K562 (cell line): ENCODE measurements at regions of chr14 and their contacts with region 1.

Region 1: DNA sequence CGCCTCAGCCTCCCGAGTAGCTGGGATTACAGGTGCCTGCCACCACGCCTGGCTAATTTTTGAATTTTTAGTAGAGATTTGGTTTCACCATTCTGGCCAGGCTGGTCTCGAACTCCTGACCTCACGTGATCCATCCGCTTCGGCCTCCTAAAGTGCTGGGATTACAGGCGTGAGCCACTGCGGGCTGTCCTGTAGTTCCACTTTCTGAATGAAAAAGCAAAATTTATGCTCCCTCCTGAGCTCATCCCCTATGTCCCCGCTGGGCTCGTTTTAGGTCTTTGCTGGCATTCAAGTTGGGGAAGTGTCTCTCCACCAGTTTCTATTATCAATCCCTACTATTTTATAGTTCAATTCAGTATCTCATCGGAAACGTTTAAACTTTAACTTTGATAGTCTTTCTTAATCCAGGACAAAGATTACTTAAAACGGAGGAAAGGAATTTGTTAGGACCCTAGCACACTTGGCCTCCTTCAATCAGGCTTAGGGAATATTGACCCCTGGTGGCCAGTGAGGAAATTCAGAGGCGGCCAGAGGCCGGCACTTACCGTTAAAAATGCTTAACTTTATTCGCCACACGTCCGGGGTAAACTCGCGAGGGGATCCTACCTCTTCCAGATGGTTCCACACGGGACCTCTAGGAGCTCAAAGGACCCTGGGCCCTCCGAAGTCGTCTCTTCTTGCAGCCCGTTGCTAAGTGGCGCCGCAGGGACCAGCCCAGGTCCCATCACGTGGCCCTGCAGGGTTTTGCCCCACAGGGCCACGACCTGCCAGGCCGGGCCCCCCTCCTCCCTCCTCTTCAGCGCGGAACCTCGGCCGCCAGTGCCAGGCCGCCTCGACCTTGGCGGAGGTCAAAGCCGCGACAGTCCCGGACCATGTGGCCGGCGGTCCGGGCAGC is 11.4 kb upstream of the DNAL1 start:
- DNase-seq: peak; percentile 33 to 64 (median 40)
- ATAC-seq: peak; percentile 85
- H3K4me3 ChIP-seq: no peak overlapping the region
- H3K27ac ChIP-seq: no peak overlapping the region
- H3K4me1 ChIP-seq: peaks cover 8 to 9% of the 10 kb centered on the region in 2 experiments; a peak in 4 of 5 replicates
- H3K27me3 ChIP-seq: no peaks in the 10 kb centered on the region
- CTCF ChIP-seq: peak; percentile 67 to 78 (median 73)
- EP300 ChIP-seq: no peak
- POLR2A ChIP-seq: no peak
- RAD21 ChIP-seq: peak; percentile 37 to 69; a peak in 3 of 4 replicates

Region 2: DNA sequence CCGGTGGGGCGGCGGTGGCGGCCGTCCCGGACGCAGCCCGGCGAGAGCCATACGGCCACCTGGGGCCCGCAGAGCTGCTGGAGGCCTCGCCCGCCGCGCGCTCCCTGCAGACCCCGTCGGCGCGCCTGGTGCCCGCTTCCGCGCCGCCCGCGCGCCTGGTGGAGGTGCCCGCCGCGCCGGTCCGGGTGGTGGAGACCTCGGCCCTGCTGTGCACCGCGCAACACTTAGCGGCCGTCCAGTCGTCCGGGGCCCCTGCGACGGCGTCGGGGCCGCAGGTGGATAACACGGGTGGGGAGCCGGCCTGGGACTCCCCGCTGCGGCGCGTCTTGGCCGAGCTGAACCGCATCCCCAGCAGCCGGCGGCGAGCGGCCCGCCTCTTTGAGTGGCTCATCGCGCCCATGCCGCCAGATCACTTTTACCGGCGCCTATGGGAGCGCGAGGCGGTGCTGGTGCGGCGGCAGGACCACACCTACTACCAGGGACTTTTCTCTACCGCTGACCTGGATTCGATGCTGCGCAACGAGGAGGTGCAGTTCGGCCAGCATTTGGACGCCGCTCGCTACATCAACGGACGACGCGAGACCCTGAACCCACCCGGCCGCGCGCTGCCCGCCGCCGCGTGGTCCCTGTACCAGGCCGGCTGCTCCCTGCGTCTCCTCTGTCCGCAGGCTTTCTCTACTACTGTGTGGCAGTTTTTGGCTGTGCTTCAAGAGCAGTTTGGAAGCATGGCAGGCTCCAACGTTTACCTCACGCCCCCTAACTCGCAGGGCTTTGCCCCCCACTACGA is 141.9 kb before region 1 on chr14:
- CTCF ChIA-PET with region 1: no interaction called
- POLR2A ChIA-PET with region 1: no interaction called
- in situ Hi-C with region 1: no loop called
- intact Hi-C with region 1: loop called (anchors 5 kb)
- DNase-seq: peak; percentile 63 to 76 (median 70)
- ATAC-seq: peak; percentile 79
- H3K4me3 ChIP-seq: peak overlapping the region; percentile 66
- H3K27ac ChIP-seq: peak overlapping the region; percentile 87
- H3K4me1 ChIP-seq: peaks cover 15 to 21% of the 10 kb centered on the region in 2 experiments; a peak in 4 of 5 replicates
- H3K27me3 ChIP-seq: no peaks in the 10 kb centered on the region
- CTCF ChIP-seq: no peak
- EP300 ChIP-seq: no peak
- POLR2A ChIP-seq: no peak
- RAD21 ChIP-seq: no peak

Region 3: GRCh38 chr14:73764406-73765280 is 131.3 kb after region 1 on chr14:
- CTCF ChIA-PET with region 1: no interaction called
- POLR2A ChIA-PET with region 1: no interaction called
- in situ Hi-C with region 1: no loop called
- intact Hi-C with region 1: no loop called
- DNase-seq: no peak
- ATAC-seq: no peak
- H3K4me3 ChIP-seq: no peak overlapping the region
- H3K27ac ChIP-seq: no peak overlapping the region
- H3K4me1 ChIP-seq: peaks cover 37 to 58% of the 10 kb centered on the region in 2 experiments
- H3K27me3 ChIP-seq: no peaks in the 10 kb centered on the region
- CTCF ChIP-seq: no peak
- EP300 ChIP-seq: no peak
- POLR2A ChIP-seq: no peak
- RAD21 ChIP-seq: no peak

Region 4: DNA sequence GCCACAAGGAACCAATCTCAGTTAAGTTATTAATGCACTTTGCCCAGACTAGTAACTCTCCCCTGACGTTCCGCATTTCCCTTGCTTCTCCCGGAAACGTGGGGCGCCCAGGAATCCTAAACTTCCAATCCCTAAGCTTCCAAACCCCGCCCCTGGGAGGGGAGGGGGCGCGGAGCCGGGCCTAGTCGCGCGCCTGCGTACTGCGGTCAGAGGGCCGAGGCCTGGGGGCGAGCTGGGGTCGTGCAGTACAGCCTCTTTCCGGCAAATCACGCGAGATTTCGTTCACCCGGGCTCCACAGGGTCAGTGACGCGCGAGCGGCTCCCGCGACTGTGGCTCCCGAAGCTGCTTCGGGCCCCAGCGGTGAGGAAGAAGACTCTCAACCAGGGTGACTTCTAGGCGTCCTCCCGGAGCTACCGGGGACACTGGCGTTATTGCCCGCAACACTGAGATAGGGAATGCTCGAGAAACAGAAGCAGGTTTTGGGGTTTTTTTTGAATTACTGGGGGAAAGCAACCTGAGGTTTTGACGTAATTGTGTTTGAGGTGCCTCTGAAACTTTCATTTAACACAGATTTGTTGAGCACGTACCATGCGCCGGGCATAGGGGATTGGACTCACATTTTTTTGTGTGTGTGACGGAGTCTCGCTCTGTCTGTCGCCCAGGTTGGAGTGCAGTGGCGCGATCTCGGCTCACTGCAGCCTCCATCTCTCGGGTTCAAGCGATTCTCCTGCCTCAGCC is 218.4 kb after region 1 on chr14 and contains the start of gene PTGR2:
- CTCF ChIA-PET with region 1: no interaction called
- POLR2A ChIA-PET with region 1: no interaction called
- in situ Hi-C with region 1: no loop called
- intact Hi-C with region 1: loop called (anchors 10 kb)
- DNase-seq: peak; percentile 90 to 94 (median 91)
- ATAC-seq: peak; percentile 93
- H3K4me3 ChIP-seq: peak within 1 kb of the TSS; percentile 45
- H3K27ac ChIP-seq: peak within 1 kb of the TSS; percentile 82
- H3K4me1 ChIP-seq: peaks cover 4 to 12% of the 10 kb centered on the region in 2 experiments; a peak in 4 of 5 replicates
- H3K27me3 ChIP-seq: no peaks in the 10 kb centered on the region
- CTCF ChIP-seq: 0 out of 6 replicates have a peak, but pooled peaks of 1 of the 3 experiments have one; percentile 7
- EP300 ChIP-seq: no peak
- POLR2A ChIP-seq: peak; percentile 88
- RAD21 ChIP-seq: no peak
- polyA plus RNA-seq, gene PTGR2: 13.0 to 20.1 TPM